ENCODE measurements at regions of chr10 and their contacts with region 1.

Region 1: DNA sequence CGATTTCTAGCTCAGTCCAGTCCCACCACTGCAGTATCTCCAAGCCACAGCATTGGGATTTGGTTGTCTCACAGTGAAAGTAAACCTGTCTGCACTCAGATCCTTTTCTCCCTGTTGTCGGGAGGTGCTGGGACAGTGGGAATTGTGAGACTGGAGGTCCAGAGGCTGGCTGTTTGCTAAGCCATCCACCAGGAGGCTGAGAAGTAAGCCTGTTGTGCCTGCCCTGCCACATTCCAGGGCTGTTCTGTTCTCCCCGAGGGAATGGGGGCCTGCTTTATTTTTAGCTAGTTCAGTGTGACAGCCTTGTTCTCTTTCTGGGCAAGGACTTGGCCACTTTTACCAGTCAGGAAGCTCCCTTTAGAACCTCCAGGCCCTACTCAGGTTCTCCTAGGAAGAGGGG is 54.9 kb downstream of the HK1 start:
- DNase-seq: peak in 1 of 2 donors; percentile 59
- H3K4me3 ChIP-seq: no peak overlapping the region
- CTCF ChIP-seq: no peak
- POLR2A ChIP-seq: no peak

Region 2: DNA sequence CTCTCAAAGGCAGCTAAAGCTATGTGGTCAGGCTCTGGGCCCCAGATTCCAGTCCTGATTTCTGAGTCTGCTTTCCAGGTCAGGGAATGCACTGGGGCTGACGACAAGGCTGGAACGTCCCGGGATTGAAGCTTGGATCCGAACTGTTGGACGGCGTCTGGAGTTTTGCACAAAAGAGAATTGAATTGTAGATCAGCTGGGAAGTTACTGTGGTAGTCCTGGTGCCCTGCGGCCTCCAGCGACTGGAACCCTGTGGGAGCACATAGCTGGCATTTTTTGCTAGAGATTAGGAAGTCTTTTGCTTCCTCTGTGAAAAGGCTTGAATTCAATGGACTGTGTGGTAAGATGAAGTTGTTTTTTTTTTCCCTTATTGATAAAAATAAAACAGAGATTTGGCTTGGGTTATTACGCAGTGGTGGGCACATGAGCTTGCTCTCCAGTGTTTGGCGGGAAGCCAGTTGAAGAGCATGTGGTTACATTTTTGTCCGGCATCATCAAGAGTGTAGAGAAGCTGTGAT is 54.7 kb before region 1 on chr10 and contains the start of gene HK1:
- intact Hi-C with region 1: no loop called
- DNase-seq: peak in 1 of 2 donors; percentile 59
- H3K4me3 ChIP-seq: no peak within 1 kb of the TSS
- CTCF ChIP-seq: no peak
- POLR2A ChIP-seq: no peak
- total RNA-seq, gene HK1: 117 to 162 (median 158) TPM

Region 3: DNA sequence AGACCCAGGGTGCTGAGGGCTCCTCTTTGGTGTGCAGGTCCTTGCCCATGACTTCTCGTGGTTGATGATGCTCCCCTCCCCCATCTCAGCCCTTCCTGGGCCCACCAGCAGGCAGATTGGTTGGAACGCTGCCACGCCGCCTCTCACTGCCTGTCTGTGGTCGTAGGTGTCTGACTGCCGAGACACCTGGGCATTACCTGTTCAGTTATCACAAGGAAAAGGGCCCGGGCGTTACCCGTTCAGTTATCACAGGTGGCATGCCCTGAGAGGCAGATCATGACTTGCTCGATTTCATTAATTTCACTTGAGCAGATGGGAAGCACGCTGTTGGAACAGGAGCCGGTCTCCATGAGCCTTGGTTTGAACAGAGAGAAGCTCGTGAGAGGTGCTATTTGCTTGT is 41.0 kb after region 1 on chr10:
- intact Hi-C with region 1: loop called (anchors 5 kb)
- DNase-seq: no peak
- H3K4me3 ChIP-seq: no peak overlapping the region
- CTCF ChIP-seq: no peak
- POLR2A ChIP-seq: no peak

Region 4: GRCh38 chr10:69451209-69451783 is 118.1 kb after region 1 on chr10 and contains the start of gene TSPAN15:
- intact Hi-C with region 1: no loop called
- DNase-seq: peak; percentile 72 to 96
- H3K4me3 ChIP-seq: peak within 1 kb of the TSS; percentile 24
- CTCF ChIP-seq: no peak
- POLR2A ChIP-seq: no peak
- total RNA-seq, gene TSPAN15: 5.9 to 47.7 (median 13.0) TPM